ENCODE measurements at regions of chr2 and their contacts with region 1.

Region 1: GRCh38 chr2:54704688-54705605 is 18.5 kb upstream of the EML6 start:
- DNase-seq: no peak
- H3K4me3 ChIP-seq: no peak overlapping the region
- H3K27ac ChIP-seq: no peak overlapping the region
- H3K4me1 ChIP-seq: no peaks in the 10 kb centered on the region
- H3K27me3 ChIP-seq: no peaks in the 10 kb centered on the region
- CTCF ChIP-seq: peak; percentile 50

Region 2: GRCh38 chr2:54115284-54116137 is 589.4 kb before region 1 on chr2 and contains the start of gene ACYP2:
- intact Hi-C with region 1: loop called (anchors 10 kb)
- DNase-seq: peak; percentile 94
- H3K4me3 ChIP-seq: peak within 1 kb of the TSS; percentile 74
- H3K27ac ChIP-seq: peak within 1 kb of the TSS; percentile 98
- H3K4me1 ChIP-seq: no peaks in the 10 kb centered on the region
- H3K27me3 ChIP-seq: no peaks in the 10 kb centered on the region
- CTCF ChIP-seq: no peak
- total RNA-seq, gene ACYP2: 13.6 to 14.1 TPM

Region 3: GRCh38 chr2:54176577-54176976 is 528.4 kb before region 1 on chr2:
- intact Hi-C with region 1: loop called (anchors 10 kb)
- DNase-seq: peak; percentile 22
- H3K4me3 ChIP-seq: no peak overlapping the region
- H3K27ac ChIP-seq: no peak overlapping the region
- H3K4me1 ChIP-seq: no peaks in the 10 kb centered on the region
- H3K27me3 ChIP-seq: no peaks in the 10 kb centered on the region
- CTCF ChIP-seq: no peak

Region 4: DNA sequence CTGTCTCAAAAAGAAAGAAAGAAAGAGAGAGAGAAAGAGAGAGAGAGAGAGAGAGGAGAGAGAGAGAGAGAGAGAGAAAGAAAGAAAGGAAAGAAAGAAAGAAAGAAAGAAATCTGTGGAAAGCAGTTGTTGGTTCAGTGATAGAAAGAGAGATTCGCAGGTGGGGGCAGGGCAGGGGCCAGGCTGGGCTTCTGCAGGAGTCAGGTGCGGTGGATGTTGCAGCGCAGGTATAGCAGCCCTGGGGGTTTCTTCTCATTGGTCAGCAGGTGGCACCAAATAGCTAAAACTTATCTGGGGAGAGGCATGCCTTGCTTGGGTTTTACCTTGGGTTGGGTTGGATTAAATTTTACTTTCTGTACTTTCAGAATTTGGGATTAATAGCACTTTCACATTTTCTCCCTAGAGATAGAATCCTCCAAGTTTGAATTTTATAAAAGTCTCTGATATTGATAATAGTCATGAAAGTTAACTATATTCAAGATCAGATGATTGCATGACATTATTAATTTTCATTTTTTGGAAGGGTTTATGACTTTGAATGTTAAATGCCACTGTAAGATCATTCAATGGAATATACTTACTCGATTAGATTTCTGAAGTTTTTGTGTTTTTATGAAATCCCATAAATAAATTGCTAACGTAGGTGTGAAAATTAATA is 182.2 kb before region 1 on chr2:
- intact Hi-C with region 1: loop called (anchors 5 kb)
- DNase-seq: peak; percentile 83
- H3K4me3 ChIP-seq: no peak overlapping the region
- H3K27ac ChIP-seq: no peak overlapping the region
- H3K4me1 ChIP-seq: no peaks in the 10 kb centered on the region
- H3K27me3 ChIP-seq: no peaks in the 10 kb centered on the region
- CTCF ChIP-seq: peak; percentile 62

Region 5: DNA sequence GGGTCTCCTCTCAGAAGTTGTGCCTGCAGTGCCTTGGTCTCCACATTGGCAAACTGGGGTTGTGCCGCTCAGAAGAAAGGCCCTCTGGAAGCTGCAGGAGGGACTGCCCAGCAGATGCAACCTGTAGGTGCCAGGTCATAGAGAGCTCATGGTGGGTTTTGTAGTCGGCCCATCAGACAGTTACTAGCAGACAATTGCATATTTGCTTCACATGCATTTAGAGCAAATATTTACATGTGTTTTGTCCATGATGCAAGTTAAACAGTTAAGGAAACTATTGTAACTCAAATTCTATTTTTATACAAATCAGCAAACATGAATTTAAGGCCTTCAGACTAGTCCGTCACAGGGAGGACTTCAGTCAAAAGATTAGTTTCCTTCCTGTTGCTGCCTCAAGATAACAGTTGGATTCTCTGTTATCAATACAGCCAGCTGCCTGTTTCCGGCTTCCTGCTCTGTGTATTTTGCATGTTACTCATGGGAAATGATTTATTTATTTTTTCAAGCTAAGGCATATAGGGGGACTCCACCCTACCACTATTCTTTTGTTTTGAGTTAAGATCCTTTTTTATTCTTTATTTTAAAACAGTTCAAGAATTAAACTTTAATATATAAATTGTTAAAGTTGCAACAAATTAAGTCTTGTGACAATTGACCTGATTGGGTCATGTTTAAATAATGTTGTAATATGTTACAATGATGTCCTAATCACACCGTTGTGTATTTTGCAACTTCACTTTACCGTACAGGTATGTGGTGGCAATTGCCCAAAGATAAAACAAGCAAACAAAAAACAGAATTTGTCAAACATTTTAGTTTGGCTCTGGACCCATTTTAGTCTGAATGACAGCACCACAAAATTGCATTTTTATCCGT is 115.4 kb before region 1 on chr2:
- intact Hi-C with region 1: no loop called
- DNase-seq: peak; percentile 65
- H3K4me3 ChIP-seq: no peak overlapping the region
- H3K27ac ChIP-seq: peak overlapping the region; percentile 54
- H3K4me1 ChIP-seq: peaks cover 23% of the 10 kb centered on the region
- H3K27me3 ChIP-seq: no peaks in the 10 kb centered on the region
- CTCF ChIP-seq: no peak

Region 6: DNA sequence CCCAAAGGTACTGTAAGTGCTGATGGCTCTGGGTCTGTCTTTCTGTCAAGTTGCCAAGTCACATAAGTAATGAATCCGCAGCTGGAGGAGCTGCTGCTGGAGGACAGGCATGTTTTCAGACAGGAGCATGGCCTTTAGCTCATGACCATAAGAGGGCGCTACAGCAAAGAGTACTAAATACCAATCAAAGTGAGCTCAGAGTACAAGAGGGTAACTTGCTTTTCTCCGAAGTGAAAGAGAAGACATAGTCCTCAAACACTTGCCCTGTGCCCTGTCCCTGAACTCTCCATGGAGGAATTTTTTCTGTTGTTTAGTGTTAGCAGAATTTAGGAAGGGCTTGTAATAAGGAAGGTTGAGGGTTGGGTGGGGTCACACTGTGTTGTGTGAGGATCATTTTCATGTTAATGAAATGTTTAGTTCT is 39.5 kb before region 1 on chr2:
- intact Hi-C with region 1: loop called (anchors 5 kb)
- DNase-seq: peak; percentile 54
- H3K4me3 ChIP-seq: no peak overlapping the region
- H3K27ac ChIP-seq: peak overlapping the region; percentile 45
- H3K4me1 ChIP-seq: no peaks in the 10 kb centered on the region
- H3K27me3 ChIP-seq: no peaks in the 10 kb centered on the region
- CTCF ChIP-seq: peak; percentile 66

Region 7: GRCh38 chr2:54750040-54750439 is 45.1 kb after region 1 on chr2:
- intact Hi-C with region 1: no loop called
- DNase-seq: no peak
- H3K4me3 ChIP-seq: no peak overlapping the region
- H3K27ac ChIP-seq: no peak overlapping the region
- H3K4me1 ChIP-seq: no peaks in the 10 kb centered on the region
- H3K27me3 ChIP-seq: no peaks in the 10 kb centered on the region
- CTCF ChIP-seq: no peak